B cell (primary cell): ENCODE measurements at regions of chr22 and their contacts with region 1.

Region 1: DNA sequence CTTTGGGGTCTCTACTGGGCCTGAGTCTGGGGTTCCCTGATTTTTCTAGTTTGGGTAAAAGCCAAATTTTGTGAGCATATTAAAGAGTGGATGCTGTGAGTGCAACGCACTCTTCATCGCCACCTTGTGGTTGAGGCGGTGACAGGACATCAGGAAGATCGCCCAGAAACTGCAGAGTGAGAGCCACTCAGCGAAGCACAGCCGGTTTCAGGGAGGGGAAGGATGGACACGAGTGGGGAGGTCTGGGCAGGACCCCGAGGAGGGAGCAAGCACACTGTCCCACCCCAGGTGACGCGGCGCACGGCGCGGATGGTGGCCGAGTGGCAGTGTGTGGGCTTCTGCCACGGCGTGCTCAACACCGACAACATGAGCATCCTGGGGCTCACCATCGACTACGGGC is 9.1 kb downstream of the SELENOO start:
- DNase-seq: peak; percentile 85
- ATAC-seq: peak; percentile 26
- H3K4me3 ChIP-seq: no peak overlapping the region
- H3K4me3 Mint-ChIP-seq: no peak overlapping the region
- H3K27ac ChIP-seq: no peak overlapping the region
- H3K27ac Mint-ChIP-seq: peak overlapping the region; percentile 27
- H3K4me1 ChIP-seq: peaks cover 15 to 26% of the 10 kb centered on the region in 2 donors
- H3K4me1 Mint-ChIP-seq: peaks cover 34% of the 10 kb centered on the region
- H3K27me3 ChIP-seq: no peaks in the 10 kb centered on the region
- H3K27me3 Mint-ChIP-seq: no peaks in the 10 kb centered on the region
- CTCF ChIP-seq: peak; percentile 85

Region 2: GRCh38 chr22:49627217-49628181 is 582.4 kb before region 1 on chr22:
- CTCF ChIA-PET with region 1: no interaction called
- POLR2A ChIA-PET with region 1: no interaction called
- intact Hi-C with region 1: no loop called
- DNase-seq: no peak
- ATAC-seq: no peak
- H3K4me3 ChIP-seq: no peak overlapping the region
- H3K4me3 Mint-ChIP-seq: no peak overlapping the region
- H3K27ac ChIP-seq: no peak overlapping the region
- H3K27ac Mint-ChIP-seq: no peak overlapping the region
- H3K4me1 ChIP-seq: no peaks in the 10 kb centered on the region
- H3K4me1 Mint-ChIP-seq: peaks cover 3% of the 10 kb centered on the region
- H3K27me3 ChIP-seq: no peaks in the 10 kb centered on the region
- H3K27me3 Mint-ChIP-seq: no peaks in the 10 kb centered on the region
- CTCF ChIP-seq: no peak

Region 3: GRCh38 chr22:50170453-50171318 is 39.2 kb before region 1 on chr22 and contains the start of gene PANX2:
- CTCF ChIA-PET with region 1: interaction called, 3 read pairs
- POLR2A ChIA-PET with region 1: no interaction called
- intact Hi-C with region 1: loop called (anchors 2 kb)
- DNase-seq: peak; percentile 26
- ATAC-seq: no peak
- H3K4me3 ChIP-seq: peak within 1 kb of the TSS in 2 of 5 experiments; percentile 25 to 33
- H3K4me3 Mint-ChIP-seq: peak within 1 kb of the TSS; percentile 77
- H3K27ac ChIP-seq: no peak within 1 kb of the TSS
- H3K27ac Mint-ChIP-seq: peak within 1 kb of the TSS; percentile 68
- H3K4me1 ChIP-seq: peaks cover 25 to 27% of the 10 kb centered on the region in 2 donors
- H3K4me1 Mint-ChIP-seq: peaks cover 22% of the 10 kb centered on the region
- H3K27me3 ChIP-seq: peaks cover 0 to 27% (median 18%) of the 10 kb centered on the region in 4 experiments
- H3K27me3 Mint-ChIP-seq: peaks cover 23% of the 10 kb centered on the region
- CTCF ChIP-seq: no peak
- total RNA-seq, gene PANX2: 0.53 and 0.59 TPM in 2 replicates

Region 4: GRCh38 chr22:50190941-50191741 is 18.8 kb before region 1 on chr22:
- CTCF ChIA-PET with region 1: interaction called, 41 read pairs
- POLR2A ChIA-PET with region 1: interaction called, 43 read pairs
- intact Hi-C with region 1: loop called (anchors 1 kb)
- DNase-seq: peak; percentile 97
- ATAC-seq: peak; percentile 44
- H3K4me3 ChIP-seq: peak overlapping the region; percentile 14 to 63 (median 48)
- H3K4me3 Mint-ChIP-seq: peak overlapping the region; percentile 86
- H3K27ac ChIP-seq: peak overlapping the region; percentile 99 to 100
- H3K27ac Mint-ChIP-seq: peak overlapping the region; percentile 99
- H3K4me1 ChIP-seq: peaks cover 84 to 97% of the 10 kb centered on the region in 2 donors
- H3K4me1 Mint-ChIP-seq: peaks cover 62% of the 10 kb centered on the region
- H3K27me3 ChIP-seq: no peaks in the 10 kb centered on the region
- H3K27me3 Mint-ChIP-seq: no peaks in the 10 kb centered on the region
- CTCF ChIP-seq: no peak